GM18951 (cell line): ENCODE measurements at regions of chr11 and their contacts with region 1.

Region 1: DNA sequence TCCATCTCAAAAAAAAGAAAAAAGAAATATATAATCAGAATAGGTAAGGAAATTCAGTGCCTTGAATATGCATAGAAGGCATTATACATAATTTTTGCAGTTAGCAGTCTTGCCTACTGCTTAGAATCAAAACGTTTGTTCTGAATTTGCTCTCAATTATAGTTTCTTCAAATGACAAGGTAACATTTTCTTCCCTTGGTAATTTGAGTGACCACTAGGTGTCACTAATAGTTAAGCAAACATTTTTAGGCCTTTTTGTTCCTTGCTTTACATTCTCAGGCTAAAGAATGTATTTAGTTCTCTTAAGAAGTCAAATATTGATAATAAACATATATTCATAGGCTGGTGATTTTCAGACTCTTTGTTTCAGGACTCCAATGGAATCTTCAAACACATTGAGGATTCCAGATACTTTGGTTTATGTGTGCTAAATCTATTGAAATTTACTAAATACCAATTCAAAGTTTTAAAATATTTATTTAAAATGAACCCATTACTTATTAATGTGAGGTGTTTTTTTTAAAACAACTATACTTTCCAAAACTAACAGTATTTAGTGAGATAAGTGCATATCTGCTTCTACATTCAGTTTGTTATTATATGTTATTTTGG is 55.0 kb upstream of the DEPDC7 start:
- POLR2A ChIP-seq: no peak

Region 2: DNA sequence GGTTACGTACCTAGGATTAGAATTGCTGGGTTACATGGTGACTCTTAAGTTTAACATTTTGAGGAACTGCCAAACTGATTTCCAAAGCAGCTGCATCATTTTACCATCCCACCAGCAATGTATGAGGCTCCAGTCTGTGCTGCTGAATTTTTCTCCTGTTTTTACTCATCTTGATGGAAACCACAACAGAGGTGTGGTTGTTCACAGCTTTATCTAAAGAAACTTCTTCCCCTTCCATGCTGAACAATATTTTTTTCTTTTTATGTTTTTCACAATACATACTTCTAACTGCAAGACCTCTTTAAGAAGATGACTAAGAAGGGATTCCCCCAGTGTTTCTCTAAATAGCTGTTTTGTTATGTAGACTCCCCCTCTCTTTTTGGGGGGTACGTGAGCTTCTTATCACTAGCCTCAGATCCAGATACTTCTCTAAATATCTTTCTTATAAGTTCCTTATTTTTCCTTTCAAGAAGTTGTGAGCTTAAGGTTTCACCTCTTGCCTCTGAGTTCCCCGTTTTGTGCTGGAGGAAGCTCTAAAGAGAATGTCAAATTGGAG is 102.7 kb after region 1 on chr11:
- in situ Hi-C with region 1: loop called (anchors 5 kb)
- POLR2A ChIP-seq: no peak